ENCODE measurements at regions of chr18 and their contacts with region 1.

Region 1: GRCh38 chr18:36129300-36130038 is at the starts of genes ELP2 and SLC39A6:
- DNase-seq: peak; percentile 91
- ATAC-seq: peak; percentile 95
- H3K4me3 ChIP-seq: peak within 1 kb of the TSS; percentile 83 to 87 (median 87)
- H3K27ac ChIP-seq: peak within 1 kb of the TSS; percentile 98
- H3K4me1 ChIP-seq: peaks cover 56% of the 10 kb centered on the region
- H3K27me3 ChIP-seq: no peaks in the 10 kb centered on the region; a peak in 1 of 5 replicates
- CTCF ChIP-seq: no peak
- EP300 ChIP-seq: no peak; a peak in 1 of 4 replicates
- POLR2A ChIP-seq: peak; percentile 91 to 97
- RAD21 ChIP-seq: no peak; the same call in 1 of the 2 replicates
- total RNA-seq, gene ELP2: 100 and 121 TPM in 2 replicates
- total RNA-seq, gene SLC39A6: 30.6 and 41.7 TPM in 2 replicates

Region 2: GRCh38 chr18:35939138-35939537 is 190.3 kb before region 1 on chr18:
- CTCF ChIA-PET with region 1: no interaction called
- POLR2A ChIA-PET with region 1: no interaction called
- in situ Hi-C with region 1: no loop called
- intact Hi-C with region 1: no loop called
- DNase-seq: no peak
- ATAC-seq: 0 out of 3 replicates have a peak, but pooled peaks have one; percentile 25
- H3K4me3 ChIP-seq: no peak overlapping the region
- H3K27ac ChIP-seq: no peak overlapping the region
- H3K4me1 ChIP-seq: no peaks in the 10 kb centered on the region
- H3K27me3 ChIP-seq: no peaks in the 10 kb centered on the region
- CTCF ChIP-seq: peak; percentile 50
- EP300 ChIP-seq: no peak
- POLR2A ChIP-seq: no peak
- RAD21 ChIP-seq: no peak

Region 3: GRCh38 chr18:36176710-36177109 is 47.2 kb after region 1 on chr18:
- CTCF ChIA-PET with region 1: no interaction called
- POLR2A ChIA-PET with region 1: interaction called, 22 read pairs
- in situ Hi-C with region 1: no loop called
- intact Hi-C with region 1: no loop called
- DNase-seq: no peak
- ATAC-seq: peak; percentile 13
- H3K4me3 ChIP-seq: no peak overlapping the region
- H3K27ac ChIP-seq: peak overlapping the region; percentile 87
- H3K4me1 ChIP-seq: peaks cover 78% of the 10 kb centered on the region
- H3K27me3 ChIP-seq: no peaks in the 10 kb centered on the region; a peak in 1 of 5 replicates
- CTCF ChIP-seq: no peak
- EP300 ChIP-seq: no peak
- POLR2A ChIP-seq: no peak
- RAD21 ChIP-seq: no peak

Region 4: DNA sequence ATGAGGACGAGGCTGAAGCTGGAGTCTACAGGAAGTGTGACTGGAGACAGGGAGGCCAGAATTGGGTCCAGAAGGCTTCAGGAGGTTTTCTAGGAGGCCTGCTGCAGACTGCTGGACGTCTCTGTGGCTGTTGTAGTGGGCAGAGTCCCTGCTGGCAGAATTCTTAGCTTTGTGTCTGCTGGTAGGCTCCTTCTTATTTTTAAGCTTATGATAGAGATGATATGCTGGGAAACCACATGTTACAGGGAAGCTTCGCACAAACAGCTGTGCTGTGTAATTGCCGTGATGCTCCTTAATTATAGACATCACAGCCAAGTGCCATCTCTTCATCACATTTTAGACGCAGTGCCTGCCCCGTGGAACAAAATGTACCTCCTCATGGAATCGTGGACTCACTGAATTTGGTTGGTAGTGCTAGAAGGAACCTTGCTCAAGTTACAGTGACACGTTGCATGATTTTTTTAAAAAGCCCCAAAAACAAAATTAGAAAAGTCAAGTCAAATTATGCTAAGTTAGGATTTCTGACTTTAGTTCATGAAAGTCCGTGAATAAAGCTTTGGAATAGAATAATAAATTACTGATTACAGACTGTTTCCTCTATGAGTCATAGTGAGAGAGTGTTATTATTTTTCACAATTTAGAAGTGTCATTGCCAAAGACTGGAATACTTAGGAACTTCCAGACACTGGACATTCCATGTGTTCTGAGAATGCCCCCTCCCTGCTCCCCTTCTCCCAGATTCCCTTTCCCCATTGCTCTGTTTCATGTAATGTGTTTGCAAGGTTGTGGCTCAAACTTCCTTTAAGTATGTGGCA is 312.2 kb after region 1 on chr18:
- CTCF ChIA-PET with region 1: no interaction called
- POLR2A ChIA-PET with region 1: no interaction called
- in situ Hi-C with region 1: no loop called
- intact Hi-C with region 1: no loop called
- DNase-seq: no peak
- ATAC-seq: no peak
- H3K4me3 ChIP-seq: no peak overlapping the region
- H3K27ac ChIP-seq: no peak overlapping the region
- H3K4me1 ChIP-seq: no peaks in the 10 kb centered on the region
- H3K27me3 ChIP-seq: peaks cover 0 to 20% of the 10 kb centered on the region in 2 experiments; a peak in 1 of 5 replicates
- CTCF ChIP-seq: no peak
- EP300 ChIP-seq: no peak
- POLR2A ChIP-seq: no peak
- RAD21 ChIP-seq: no peak